Heart left ventricle (tissue), 16 donors: ENCODE measurements at regions of chr10 and their contacts with region 1.

Region 1: GRCh38 chr10:112721080-112721698 is 228.9 kb upstream of the TCF7L2 start:
- DNase-seq: no peak
- ATAC-seq: peak in 3 of 4 donors; percentile 45 to 64 (median 56)
- H3K4me3 ChIP-seq: no peak overlapping the region
- H3K27ac ChIP-seq: no peak overlapping the region
- H3K4me1 ChIP-seq: peaks cover 0 to 3% (median 0%) of the 10 kb centered on the region in 12 donors
- H3K27me3 ChIP-seq: no peaks in the 10 kb centered on the region
- CTCF ChIP-seq: peak; percentile 44 to 78 (median 66)
- POLR2A ChIP-seq: no peak

Region 2: DNA sequence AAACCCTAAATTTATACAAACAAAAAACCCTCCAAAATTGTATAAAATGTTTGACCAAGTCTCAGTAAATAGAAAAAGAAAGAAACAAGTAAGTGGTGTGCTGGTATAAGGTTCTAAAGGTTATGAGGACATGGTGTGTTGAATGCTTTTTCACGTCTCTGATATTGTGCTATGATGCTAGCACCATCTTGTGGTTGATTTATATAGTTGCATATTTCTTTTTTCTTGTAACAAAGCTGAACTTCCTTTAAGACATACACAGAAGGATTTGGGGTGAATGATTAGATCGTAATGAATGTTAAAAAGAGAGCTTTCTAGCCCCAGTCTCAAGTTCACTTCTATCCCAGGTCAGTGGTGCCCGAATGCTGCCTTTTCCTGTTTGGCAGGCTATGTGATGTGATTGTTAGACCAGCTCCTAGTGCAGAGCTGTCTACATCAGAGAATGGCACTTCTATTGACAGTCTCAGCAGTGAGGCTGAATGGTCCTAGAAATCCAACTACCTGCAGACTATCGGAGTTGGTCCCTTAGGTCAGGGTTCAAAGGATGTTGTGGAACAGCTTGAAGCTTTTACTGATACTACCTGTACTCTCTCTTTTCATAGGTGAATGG is 249.2 kb before region 1 on chr10:
- intact Hi-C with region 1: loop called in 1 of 10 experiments (anchors 5 kb)
- DNase-seq: no peak
- ATAC-seq: peak; percentile 17 to 63 (median 56)
- H3K4me3 ChIP-seq: no peak overlapping the region
- H3K27ac ChIP-seq: no peak overlapping the region
- H3K4me1 ChIP-seq: peaks cover 0 to 10% (median 0%) of the 10 kb centered on the region in 12 donors
- H3K27me3 ChIP-seq: no peaks in the 10 kb centered on the region
- CTCF ChIP-seq: peak; percentile 60 to 81 (median 70)
- POLR2A ChIP-seq: no peak

Region 3: DNA sequence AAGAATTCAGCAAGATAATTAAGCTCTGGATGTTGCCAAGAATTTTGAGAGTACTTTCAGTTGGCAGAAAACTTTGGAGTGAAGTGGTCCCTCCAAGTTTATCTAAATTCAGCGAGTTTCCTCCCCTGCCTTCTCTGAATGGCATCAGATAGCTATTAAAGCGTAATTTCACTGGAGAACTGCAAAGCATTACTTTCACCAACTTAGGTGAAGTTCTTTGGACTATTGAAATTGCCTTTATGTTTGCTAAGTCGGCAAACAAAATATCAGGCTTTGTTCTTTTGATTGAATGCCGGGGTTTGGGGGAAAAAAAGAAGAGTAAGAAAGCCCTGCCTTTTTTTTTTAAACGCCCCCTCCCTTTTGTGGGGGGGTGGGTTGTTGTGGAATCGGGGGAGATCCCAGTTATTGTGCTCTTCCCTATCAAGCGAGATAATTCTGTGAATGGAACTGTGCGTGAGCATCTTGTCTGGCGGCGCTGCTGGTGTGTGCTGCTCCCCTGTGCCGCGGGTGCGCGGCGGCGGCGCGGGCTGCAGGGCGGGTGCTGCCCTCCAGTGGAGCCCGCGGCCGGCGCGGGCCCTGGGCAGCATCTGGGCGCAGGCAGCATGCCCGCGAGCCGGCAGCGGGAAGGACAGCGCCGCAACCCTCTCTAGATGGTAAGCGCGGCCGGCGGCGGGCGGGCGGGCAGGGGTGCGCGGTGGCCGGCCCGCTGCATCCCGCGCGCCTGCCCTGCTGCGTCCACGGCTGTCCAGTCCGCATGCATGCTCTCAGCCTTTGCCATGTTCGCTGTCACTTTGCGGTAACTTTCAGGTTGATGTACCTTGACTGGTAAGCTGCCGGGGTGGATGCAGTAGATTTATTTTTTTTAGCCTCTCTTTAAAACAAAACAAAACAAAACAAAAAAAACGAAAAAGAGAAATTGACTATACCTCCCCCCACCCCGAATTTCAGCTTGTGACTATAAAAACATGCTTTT is 405.3 kb after region 1 on chr10:
- intact Hi-C with region 1: loop called in 9 of 10 experiments (anchors 2 to 10 kb)
- DNase-seq: peak; percentile 66 to 86 (median 72)
- ATAC-seq: peak; percentile 69 to 99 (median 94)
- H3K4me3 ChIP-seq: peak overlapping the region in 9 of 12 donors; percentile 20 to 59 (median 42)
- H3K27ac ChIP-seq: peak overlapping the region in 7 of 12 donors; percentile 12 to 74 (median 42)
- H3K4me1 ChIP-seq: peaks cover 0 to 24% (median 7%) of the 10 kb centered on the region in 12 donors
- H3K27me3 ChIP-seq: peaks cover 0 to 5% (median 0%) of the 10 kb centered on the region in 9 donors
- CTCF ChIP-seq: peak; percentile 37 to 94 (median 80)
- POLR2A ChIP-seq: no peak